Posterior cingulate gyrus (tissue), 11 donors: ENCODE measurements at regions of chr10 and their contacts with region 1.

Region 1: DNA sequence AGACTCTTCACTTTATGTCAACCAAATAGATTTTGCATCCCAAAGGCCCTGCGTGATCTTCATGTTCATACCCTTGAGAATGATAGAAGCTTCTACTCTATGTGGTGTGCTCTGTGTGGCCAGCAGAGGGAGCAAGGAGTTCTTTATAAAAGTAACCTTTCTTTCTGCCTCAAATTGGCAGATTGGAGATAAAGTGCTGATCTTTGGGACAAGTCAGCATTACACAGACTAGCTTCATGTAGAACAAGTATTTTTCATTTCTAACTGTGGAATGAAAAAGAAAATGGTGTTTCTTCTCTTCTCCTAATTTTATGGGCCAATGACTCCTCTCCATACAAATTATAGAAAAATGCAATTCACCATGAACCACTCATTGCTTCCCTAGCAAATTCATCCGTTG is 1214.1 kb downstream of the SORCS1 start:
- DNase-seq: peak in 9 of 10 donors; percentile 12 to 89 (median 65)

Region 2: GRCh38 chr10:105986912-105987635 is 36.7 kb after region 1 on chr10:
- intact Hi-C with region 1: no loop called
- DNase-seq: no peak

Region 3: DNA sequence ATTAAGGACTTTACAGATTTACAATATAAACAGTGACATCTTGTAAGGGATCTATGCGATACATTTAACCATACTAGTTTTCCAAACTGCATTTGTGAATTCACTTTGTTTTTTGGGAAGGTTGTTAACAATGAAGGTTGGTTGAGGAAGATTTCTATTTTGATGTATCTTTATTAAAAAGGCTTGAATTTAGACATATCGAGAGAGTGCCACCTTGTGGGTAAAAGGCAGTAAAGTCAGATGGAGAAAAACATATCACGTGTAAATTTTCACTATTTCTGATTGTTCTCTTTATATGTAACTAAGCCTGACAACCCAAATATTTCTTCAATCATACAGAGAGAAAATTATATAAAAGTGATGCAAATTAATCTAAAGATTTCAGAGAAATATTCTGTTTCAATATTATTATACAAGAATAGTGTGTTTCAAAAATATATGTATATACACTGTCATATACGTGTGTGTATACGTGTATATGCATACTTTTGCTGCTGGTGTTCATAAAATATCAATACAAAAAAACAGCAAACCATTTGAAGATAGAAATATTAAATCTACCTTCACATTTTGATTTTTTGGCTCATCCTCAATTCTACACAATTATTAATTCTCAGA is 225.5 kb after region 1 on chr10:
- intact Hi-C with region 1: loop called (anchors 5 kb)
- DNase-seq: no peak

Region 4: DNA sequence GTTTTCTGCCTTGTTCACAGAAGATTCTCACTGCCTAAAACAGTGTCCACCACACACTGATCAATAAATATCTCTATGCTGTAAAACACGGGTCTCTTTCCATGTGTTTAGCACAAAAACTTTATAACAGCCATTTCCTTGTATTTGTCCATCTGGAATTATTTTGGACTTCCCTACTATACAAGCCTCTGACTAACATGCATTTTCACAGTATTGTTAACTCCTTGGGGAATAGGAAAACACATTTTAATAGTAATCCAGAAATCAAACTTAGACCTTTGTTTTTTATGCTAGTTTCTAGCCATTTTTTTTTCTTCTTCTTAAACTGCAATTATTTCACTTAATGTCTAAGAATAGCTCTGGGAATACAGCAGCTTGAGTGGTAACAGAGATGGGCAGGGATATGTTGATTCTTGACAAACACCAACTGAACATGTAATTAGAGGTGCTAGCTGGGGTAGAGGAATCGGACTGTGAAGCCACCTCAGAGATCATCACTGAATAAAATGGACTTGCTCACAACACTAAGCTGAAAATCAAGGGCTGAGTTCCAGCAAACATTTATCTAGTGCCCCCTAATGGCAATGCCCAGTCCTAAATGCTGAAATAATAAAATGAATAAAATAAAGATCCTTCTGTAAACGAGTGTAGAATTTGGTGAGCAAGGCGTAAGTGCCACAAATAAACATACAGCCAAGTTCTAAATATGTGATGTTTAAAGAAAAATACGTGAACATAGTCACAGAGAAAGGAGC is 621.0 kb after region 1 on chr10:
- intact Hi-C with region 1: loop called (anchors 5 kb)
- DNase-seq: peak in 1 of 10 donors; percentile 32

Region 5: DNA sequence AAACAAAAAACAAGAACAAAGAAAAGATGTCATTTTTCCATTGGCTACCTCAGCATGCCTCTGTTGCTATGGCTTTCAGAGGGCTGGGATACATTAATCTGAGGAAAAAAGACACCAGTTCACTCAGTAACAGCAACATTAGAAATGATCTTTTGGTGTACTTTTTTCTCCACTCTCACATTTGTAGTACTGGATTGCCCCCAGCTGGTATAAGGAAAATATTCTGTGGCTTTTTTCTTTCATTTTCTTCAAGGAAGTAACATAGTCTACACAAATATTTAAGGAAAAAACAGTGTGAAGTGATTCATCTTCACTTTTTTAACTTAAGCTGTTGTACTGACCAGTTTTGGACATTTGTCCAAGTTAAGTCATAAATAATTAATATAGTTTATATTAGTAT is 731.8 kb after region 1 on chr10:
- intact Hi-C with region 1: loop called (anchors 5 kb)
- DNase-seq: no peak